IMR-90 (cell line): ENCODE measurements at regions of chr7 and their contacts with region 1.

Region 1: GRCh38 chr7:142063551-142064442 is 47.7 kb upstream of the MGAM2 start:
- DNase-seq: no peak
- ATAC-seq: no peak
- H3K4me3 ChIP-seq: no peak overlapping the region
- H3K27ac ChIP-seq: no peak overlapping the region
- H3K4me1 ChIP-seq: no peaks in the 10 kb centered on the region
- H3K27me3 ChIP-seq: no peaks in the 10 kb centered on the region
- CTCF ChIP-seq: no peak
- POLR2A ChIP-seq: no peak
- RAD21 ChIP-seq: no peak

Region 2: GRCh38 chr7:141864775-141865447 is 198.9 kb before region 1 on chr7:
- CTCF ChIA-PET with region 1: no interaction called
- POLR2A ChIA-PET with region 1: no interaction called
- dilution Hi-C with region 1: no loop called
- in situ Hi-C with region 1: no loop called
- intact Hi-C with region 1: no loop called
- DNase-seq: no peak
- ATAC-seq: no peak
- H3K4me3 ChIP-seq: no peak overlapping the region
- H3K27ac ChIP-seq: no peak overlapping the region
- H3K4me1 ChIP-seq: no peaks in the 10 kb centered on the region
- H3K27me3 ChIP-seq: no peaks in the 10 kb centered on the region
- CTCF ChIP-seq: no peak
- POLR2A ChIP-seq: no peak
- RAD21 ChIP-seq: no peak

Region 3: GRCh38 chr7:142085428-142085827 is 21.6 kb after region 1 on chr7:
- CTCF ChIA-PET with region 1: no interaction called
- POLR2A ChIA-PET with region 1: no interaction called
- dilution Hi-C with region 1: no loop called
- in situ Hi-C with region 1: no loop called
- intact Hi-C with region 1: loop called (anchors 1 kb)
- DNase-seq: no peak
- ATAC-seq: no peak
- H3K4me3 ChIP-seq: no peak overlapping the region
- H3K27ac ChIP-seq: no peak overlapping the region
- H3K4me1 ChIP-seq: no peaks in the 10 kb centered on the region
- H3K27me3 ChIP-seq: no peaks in the 10 kb centered on the region
- CTCF ChIP-seq: no peak
- POLR2A ChIP-seq: no peak
- RAD21 ChIP-seq: no peak

Region 4: GRCh38 chr7:142098004-142098403 is 34.2 kb after region 1 on chr7:
- CTCF ChIA-PET with region 1: no interaction called
- POLR2A ChIA-PET with region 1: no interaction called
- dilution Hi-C with region 1: no loop called
- in situ Hi-C with region 1: loop called (anchors 5 kb)
- intact Hi-C with region 1: loop called (anchors 1 kb)
- DNase-seq: no peak
- ATAC-seq: no peak
- H3K4me3 ChIP-seq: no peak overlapping the region
- H3K27ac ChIP-seq: no peak overlapping the region
- H3K4me1 ChIP-seq: no peaks in the 10 kb centered on the region
- H3K27me3 ChIP-seq: no peaks in the 10 kb centered on the region
- CTCF ChIP-seq: no peak
- POLR2A ChIP-seq: no peak
- RAD21 ChIP-seq: no peak